Activated CD4-positive, alpha-beta T cell treated with anti-CD3 and anti-CD28 coated beads for 36 hours (primary cell): ENCODE measurements at regions of chr14 and their contacts with region 1.

Region 1: GRCh38 chr14:65156568-65157366 is 54.5 kb upstream of the MAX start:
- DNase-seq: no peak
- ATAC-seq: no peak
- H3K4me3 Mint-ChIP-seq: no peak overlapping the region
- H3K27ac Mint-ChIP-seq: no peak overlapping the region
- H3K4me1 Mint-ChIP-seq: peaks cover 10% of the 10 kb centered on the region
- H3K27me3 Mint-ChIP-seq: no peaks in the 10 kb centered on the region

Region 2: GRCh38 chr14:65170768-65171507 is 14.2 kb after region 1 on chr14:
- CTCF ChIA-PET with region 1: interaction called, 3 read pairs
- POLR2A ChIA-PET with region 1: interaction called, 10 read pairs
- intact Hi-C with region 1: no loop called
- DNase-seq: peak; percentile 73
- ATAC-seq: peak; percentile 84
- H3K4me3 Mint-ChIP-seq: peak overlapping the region; percentile 71
- H3K27ac Mint-ChIP-seq: peak overlapping the region; percentile 76
- H3K4me1 Mint-ChIP-seq: peaks cover 19% of the 10 kb centered on the region
- H3K27me3 Mint-ChIP-seq: peaks cover 9% of the 10 kb centered on the region